ENCODE measurements at regions of chr1 and their contacts with region 1.

Region 1: DNA sequence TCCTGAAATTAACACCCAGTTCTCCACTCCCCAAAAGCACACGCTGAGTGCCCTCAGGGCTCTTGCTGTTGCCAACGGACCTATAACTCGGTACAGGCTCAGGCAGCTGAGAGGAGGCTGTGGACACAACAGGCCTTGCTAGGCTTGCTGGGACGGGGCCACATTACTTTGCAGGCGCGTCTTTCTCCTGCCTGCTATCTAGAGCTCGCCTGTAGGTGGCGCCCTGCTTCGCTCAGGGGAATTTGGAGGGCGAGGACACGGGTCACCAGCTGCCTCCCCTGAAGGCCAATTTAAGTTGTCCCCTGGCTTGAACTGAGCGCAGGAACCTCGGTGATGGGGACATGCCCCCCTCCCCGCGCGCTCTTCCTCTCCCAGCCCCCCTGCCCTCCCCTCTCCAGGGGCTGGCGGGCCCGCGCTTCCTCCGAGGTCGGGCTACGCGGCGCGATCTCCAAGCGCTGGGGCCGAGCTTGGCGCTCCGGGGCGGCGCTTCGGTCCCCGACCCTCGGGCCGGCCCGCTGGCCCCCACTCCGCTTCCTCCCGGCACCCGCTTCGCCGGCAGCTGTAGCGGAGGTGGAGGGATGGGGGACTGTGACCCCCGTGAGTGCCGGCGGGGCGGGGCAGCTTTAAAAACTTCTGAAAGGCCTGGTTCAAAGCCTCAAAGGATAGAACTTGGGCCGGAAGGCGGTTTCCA is 32.4 kb upstream of the NFIA start:
- DNase-seq: peak; percentile 80
- H3K4me3 ChIP-seq: peak overlapping the region; percentile 56 to 72 (median 65)
- H3K27ac ChIP-seq: no peak overlapping the region
- H3K4me1 ChIP-seq: peaks cover 19% of the 10 kb centered on the region
- H3K27me3 ChIP-seq: no peaks in the 10 kb centered on the region
- CTCF ChIP-seq: peak; percentile 91 to 98

Region 2: DNA sequence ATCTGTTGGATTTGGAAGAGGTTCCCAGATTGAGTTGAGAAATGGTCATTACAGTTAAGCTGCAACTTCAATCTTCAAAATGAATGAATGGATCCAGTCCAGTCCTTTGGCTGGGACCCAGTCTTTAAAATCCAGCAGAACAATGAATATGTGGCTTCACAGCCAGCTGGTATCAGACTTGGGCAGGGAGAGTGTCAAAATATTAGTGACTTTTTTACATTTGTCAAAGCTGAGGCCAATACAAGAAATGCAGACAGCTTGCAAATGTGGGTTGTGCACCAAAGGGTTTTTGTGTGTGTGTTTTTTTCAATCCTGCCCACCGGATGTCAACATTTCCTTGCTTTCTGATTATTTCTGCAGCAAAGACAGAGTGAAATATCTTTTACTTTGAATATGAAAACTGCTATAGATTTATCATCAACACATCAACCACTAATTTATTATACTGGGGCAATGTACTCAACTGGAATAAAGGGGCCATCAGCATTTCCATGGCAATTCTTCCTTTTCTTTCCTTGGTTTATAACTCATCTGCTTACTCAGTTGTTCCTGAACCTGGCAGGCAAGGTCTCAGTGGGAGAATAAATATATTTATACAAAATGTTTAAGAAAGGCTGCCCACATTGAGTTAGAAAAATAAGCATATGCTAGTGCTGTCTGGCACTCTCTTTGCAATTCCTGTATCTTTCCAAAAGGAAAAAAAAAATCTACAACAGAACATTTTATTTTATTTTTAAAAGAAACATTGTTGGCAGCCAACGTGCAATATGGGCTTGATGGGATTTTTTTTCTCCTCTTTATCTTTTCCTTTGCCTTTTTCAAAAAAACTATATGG is 484.9 kb before region 1 on chr1:
- CTCF ChIA-PET with region 1: no interaction called
- dilution Hi-C with region 1: no loop called
- in situ Hi-C with region 1: no loop called
- intact Hi-C with region 1: loop called (anchors 10 kb)
- DNase-seq: no peak
- H3K4me3 ChIP-seq: no peak overlapping the region
- H3K27ac ChIP-seq: no peak overlapping the region
- H3K4me1 ChIP-seq: peaks cover 10% of the 10 kb centered on the region
- H3K27me3 ChIP-seq: no peaks in the 10 kb centered on the region
- CTCF ChIP-seq: no peak

Region 3: DNA sequence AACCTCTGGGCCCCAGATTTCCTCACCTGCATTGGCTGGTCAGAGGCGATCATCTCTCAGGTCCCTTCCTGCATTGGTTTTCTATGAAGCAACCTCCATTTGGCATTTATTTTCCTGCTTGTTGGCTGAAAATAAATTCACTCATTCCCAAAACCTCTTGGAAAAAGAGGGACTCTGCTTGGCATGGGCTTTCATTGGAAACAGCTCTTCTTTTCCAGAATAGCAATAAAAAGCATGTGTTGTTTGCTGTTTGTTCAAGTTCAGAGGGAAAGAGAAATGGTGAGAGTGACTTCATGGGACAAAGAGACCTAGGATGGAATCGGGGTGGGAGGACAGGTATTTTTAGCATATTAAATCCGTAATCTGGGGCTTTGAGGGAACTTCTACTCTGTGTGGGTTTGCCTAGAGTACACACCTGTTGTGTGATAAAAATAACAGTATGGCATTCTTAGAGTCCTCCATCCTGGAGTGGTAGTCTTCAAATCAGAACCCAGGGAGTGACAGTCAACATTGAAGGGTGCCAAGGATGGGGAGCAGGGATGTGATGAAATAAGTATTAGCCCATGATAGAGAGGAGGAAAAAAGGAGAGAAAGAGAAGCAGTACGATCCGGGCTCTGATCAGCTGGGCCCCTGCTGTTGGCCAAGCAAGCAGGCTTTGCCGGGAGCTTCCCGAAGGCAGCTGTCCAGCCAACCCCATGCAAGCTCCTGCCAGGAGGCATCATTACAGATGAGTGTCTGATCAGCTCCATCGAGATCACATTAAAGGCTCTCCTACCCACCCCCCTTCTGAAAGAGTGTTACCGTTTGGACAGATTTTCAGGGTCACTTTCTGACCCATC is 99.6 kb before region 1 on chr1:
- CTCF ChIA-PET with region 1: no interaction called
- dilution Hi-C with region 1: no loop called
- in situ Hi-C with region 1: no loop called
- intact Hi-C with region 1: no loop called
- DNase-seq: no peak
- H3K4me3 ChIP-seq: no peak overlapping the region
- H3K27ac ChIP-seq: no peak overlapping the region
- H3K4me1 ChIP-seq: no peaks in the 10 kb centered on the region
- H3K27me3 ChIP-seq: no peaks in the 10 kb centered on the region
- CTCF ChIP-seq: no peak

Region 4: GRCh38 chr1:61013189-61013945 is 36.6 kb before region 1 on chr1:
- CTCF ChIA-PET with region 1: no interaction called
- dilution Hi-C with region 1: no loop called
- in situ Hi-C with region 1: no loop called
- intact Hi-C with region 1: no loop called
- DNase-seq: no peak
- H3K4me3 ChIP-seq: no peak overlapping the region
- H3K27ac ChIP-seq: no peak overlapping the region
- H3K4me1 ChIP-seq: no peaks in the 10 kb centered on the region
- H3K27me3 ChIP-seq: peaks cover 2% of the 10 kb centered on the region
- CTCF ChIP-seq: no peak

Region 5: DNA sequence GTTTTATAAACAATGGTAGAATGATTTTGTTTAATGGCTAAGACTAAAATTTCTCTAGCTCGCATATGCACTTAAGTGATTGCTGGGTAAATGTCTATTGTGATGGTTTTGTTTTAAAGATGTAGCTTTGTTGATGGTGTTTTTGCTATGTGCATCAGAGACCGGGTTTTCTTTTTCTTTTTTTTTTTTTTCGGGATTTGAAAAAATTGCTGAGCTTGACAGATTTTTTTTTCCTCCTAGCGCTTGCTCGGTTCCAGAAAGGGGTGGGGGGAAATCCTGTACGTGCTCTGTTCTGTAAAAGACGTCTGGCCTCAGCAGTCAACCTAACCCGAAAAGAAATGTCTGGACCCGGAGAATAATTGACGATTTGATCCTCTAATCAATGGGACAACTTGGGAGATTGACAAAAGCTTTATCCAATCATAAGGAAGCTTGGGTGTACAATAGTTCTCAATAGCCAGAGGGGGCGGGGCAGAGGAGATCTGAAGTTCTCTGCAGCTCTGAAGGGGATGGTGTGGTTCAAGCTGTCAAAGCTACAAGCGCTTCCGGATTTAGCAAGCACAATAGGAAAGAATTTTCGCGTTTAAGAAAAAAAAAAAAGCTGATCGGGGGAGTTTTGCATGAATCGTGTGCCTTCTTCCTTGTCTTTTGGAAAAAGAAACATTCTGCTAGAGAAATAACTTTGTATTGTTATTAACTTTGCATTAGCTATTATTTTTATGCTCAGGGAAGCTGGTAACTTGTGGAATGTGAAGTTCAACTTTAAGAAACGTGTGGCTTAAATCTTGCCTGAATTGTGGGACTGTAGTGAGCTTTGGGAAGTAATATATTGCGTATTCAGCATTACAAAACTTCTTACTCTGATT is 27.9 kb after region 1 on chr1:
- CTCF ChIA-PET with region 1: no interaction called
- dilution Hi-C with region 1: no loop called
- in situ Hi-C with region 1: no loop called
- intact Hi-C with region 1: loop called (anchors 2 kb)
- DNase-seq: peak; percentile 100
- H3K4me3 ChIP-seq: peak overlapping the region; percentile 63 to 92 (median 81)
- H3K27ac ChIP-seq: peak overlapping the region; percentile 64
- H3K4me1 ChIP-seq: peaks cover 33% of the 10 kb centered on the region
- H3K27me3 ChIP-seq: no peaks in the 10 kb centered on the region
- CTCF ChIP-seq: no peak

Region 6: DNA sequence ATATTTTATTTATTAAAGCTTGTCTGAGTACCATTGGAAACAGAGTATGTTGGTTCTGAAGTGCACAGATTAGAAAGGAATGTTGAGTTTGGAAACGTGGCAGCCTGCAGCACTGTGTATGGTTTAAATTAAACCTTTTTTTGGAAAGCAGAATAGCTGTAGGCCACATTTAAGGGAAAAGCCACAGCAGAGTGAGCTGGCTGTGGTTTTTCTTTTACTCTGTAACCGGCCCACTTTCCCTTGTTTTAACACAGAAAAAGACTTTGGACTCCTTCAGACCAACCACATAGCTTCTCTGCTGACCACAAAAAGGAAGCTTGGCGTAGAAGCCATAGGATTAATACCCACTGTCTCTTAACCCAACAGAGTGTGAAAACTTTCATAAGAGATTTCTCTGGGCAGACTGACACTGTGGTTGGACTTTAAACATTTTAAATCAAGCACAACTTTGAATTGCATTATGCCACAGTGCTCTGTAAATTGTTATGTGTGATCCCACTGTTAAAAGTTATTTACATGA is 107.5 kb after region 1 on chr1:
- CTCF ChIA-PET with region 1: no interaction called
- dilution Hi-C with region 1: no loop called
- in situ Hi-C with region 1: no loop called
- intact Hi-C with region 1: no loop called
- DNase-seq: peak; percentile 56
- H3K4me3 ChIP-seq: no peak overlapping the region
- H3K27ac ChIP-seq: no peak overlapping the region
- H3K4me1 ChIP-seq: peaks cover 9% of the 10 kb centered on the region
- H3K27me3 ChIP-seq: no peaks in the 10 kb centered on the region
- CTCF ChIP-seq: no peak

Region 7: DNA sequence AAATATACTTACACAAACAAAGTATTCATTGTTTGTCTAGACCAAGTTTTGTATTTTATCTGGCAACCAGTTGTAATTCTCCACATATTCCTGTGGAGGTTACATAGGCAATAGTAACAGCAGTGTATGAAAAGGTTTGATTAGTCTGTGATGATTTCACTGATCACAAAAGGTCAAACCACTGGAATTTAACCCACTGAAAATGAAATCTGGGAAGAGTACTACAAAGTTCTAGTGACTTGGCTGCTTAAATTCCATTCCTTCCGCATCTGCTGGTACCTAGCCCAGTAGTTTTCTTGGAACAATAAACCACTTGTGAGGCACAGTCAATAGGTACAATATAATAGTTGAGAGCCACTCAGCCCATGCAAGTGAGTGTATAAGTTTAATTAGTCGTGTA is 237.7 kb after region 1 on chr1:
- CTCF ChIA-PET with region 1: no interaction called
- dilution Hi-C with region 1: no loop called
- in situ Hi-C with region 1: no loop called
- intact Hi-C with region 1: loop called (anchors 1 kb)
- DNase-seq: peak; percentile 95
- H3K4me3 ChIP-seq: no peak overlapping the region
- H3K27ac ChIP-seq: peak overlapping the region; percentile 96
- H3K4me1 ChIP-seq: peaks cover 41% of the 10 kb centered on the region
- H3K27me3 ChIP-seq: no peaks in the 10 kb centered on the region
- CTCF ChIP-seq: peak in 1 of 2 donors; percentile 5

Region 8: GRCh38 chr1:61851849-61852669 is 802.1 kb after region 1 on chr1:
- CTCF ChIA-PET with region 1: no interaction called
- dilution Hi-C with region 1: no loop called
- in situ Hi-C with region 1: no loop called
- intact Hi-C with region 1: loop called (anchors 2 kb)
- DNase-seq: peak; percentile 31
- H3K4me3 ChIP-seq: no peak overlapping the region
- H3K27ac ChIP-seq: no peak overlapping the region
- H3K4me1 ChIP-seq: no peaks in the 10 kb centered on the region
- H3K27me3 ChIP-seq: no peaks in the 10 kb centered on the region
- CTCF ChIP-seq: peak; percentile 68 to 78

Measured in mammary epithelial cell (primary cell).